Dendritic cell treated with granulocyte-macrophage colony-stimulating factor and Interleukin-4, amounts not matched to agents 40 ng/mL and 50 ng/mL, for 4 days (primary cell): ENCODE measurements at regions of chr2 and their contacts with region 1.

Region 1: DNA sequence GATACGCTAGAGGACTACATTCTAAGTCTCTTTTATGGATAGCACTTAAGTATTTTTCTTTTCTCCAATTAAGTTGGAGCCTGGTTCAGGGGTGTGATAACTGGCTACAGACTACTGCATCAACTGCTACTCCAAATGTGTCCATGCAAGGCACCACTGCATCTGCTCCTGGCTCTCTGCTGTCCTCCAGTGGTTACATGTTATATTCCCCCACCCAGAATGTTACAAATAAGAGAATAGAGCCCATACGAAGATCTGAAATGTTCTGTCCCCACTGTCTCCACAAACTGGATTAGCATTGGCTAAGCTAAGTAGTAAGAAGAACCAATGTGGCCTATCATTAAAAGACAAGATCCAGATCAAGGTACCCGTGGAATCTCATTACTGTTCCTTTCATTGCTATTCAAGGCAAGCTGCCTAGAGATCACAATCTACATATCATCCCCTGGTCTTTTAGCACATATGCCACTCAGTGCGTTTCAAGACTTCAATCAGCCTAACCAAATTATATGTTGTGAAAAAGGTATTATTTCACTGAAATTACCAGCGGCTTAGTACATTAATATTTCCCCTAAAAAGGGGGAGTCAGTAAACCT is 308.3 kb upstream of the SLC8A1 start:
- H3K4me3 Mint-ChIP-seq: no peak overlapping the region
- H3K27ac Mint-ChIP-seq: no peak overlapping the region
- H3K4me1 Mint-ChIP-seq: peaks cover 23% of the 10 kb centered on the region
- H3K27me3 Mint-ChIP-seq: no peaks in the 10 kb centered on the region

Region 2: DNA sequence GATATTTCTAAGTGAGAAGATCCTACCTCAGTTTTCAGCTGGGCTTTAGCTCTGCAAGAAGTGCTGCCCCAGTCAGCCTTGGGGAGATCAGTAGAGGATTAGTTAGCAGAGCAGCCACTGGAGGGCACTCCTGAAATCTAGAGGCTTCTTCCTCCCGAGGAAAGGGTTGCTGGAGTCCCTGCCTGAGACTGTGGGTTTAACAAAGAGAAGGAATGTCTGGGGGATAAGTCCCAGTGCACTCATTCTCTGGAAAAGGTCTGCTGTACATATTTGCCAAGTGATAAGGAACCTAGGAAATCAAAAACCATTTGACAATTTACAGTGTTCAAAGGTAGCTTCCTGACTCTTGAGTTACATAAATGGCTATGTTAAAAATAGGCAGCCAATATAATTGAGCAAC is 515.5 kb before region 1 on chr2:
- intact Hi-C with region 1: loop called (anchors 10 kb)
- H3K4me3 Mint-ChIP-seq: no peak overlapping the region
- H3K27ac Mint-ChIP-seq: no peak overlapping the region
- H3K4me1 Mint-ChIP-seq: no peaks in the 10 kb centered on the region
- H3K27me3 Mint-ChIP-seq: no peaks in the 10 kb centered on the region

Region 3: GRCh38 chr2:40915651-40916050 is 155.5 kb after region 1 on chr2:
- intact Hi-C with region 1: no loop called
- H3K4me3 Mint-ChIP-seq: no peak overlapping the region
- H3K27ac Mint-ChIP-seq: no peak overlapping the region
- H3K4me1 Mint-ChIP-seq: no peaks in the 10 kb centered on the region
- H3K27me3 Mint-ChIP-seq: no peaks in the 10 kb centered on the region